B cell (primary cell): ENCODE measurements at regions of chr9 and their contacts with region 1.

Region 1: DNA sequence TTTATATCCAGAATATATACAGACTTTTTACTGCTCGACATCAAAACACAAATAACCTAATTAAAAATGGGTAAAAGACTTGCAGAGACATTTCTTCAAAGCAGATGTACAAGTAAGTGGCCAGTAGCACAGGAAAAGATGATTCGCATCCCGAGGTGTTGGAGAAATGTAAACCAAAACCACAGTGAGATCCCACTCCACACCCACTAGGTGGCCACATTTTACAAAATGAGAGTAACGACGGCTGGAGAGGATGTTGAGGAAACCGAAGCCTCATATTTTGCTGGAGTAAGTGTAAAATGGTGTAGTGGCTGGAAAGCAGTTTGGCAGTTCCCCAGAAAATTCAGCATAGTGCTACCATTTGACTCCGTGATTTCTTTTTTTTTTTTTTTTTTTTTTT is 21.2 kb upstream of the GBGT1 start:
- DNase-seq: peak; percentile 58
- ATAC-seq: no peak
- H3K4me3 ChIP-seq: no peak overlapping the region
- H3K4me3 Mint-ChIP-seq: no peak overlapping the region
- H3K27ac ChIP-seq: no peak overlapping the region
- H3K27ac Mint-ChIP-seq: no peak overlapping the region
- H3K4me1 ChIP-seq: peaks cover 8 to 12% of the 10 kb centered on the region in 2 donors
- H3K4me1 Mint-ChIP-seq: peaks cover 8% of the 10 kb centered on the region
- H3K27me3 ChIP-seq: peaks cover 0 to 18% (median 4%) of the 10 kb centered on the region in 4 experiments
- H3K27me3 Mint-ChIP-seq: peaks cover 30% of the 10 kb centered on the region
- CTCF ChIP-seq: peak; percentile 43

Region 2: DNA sequence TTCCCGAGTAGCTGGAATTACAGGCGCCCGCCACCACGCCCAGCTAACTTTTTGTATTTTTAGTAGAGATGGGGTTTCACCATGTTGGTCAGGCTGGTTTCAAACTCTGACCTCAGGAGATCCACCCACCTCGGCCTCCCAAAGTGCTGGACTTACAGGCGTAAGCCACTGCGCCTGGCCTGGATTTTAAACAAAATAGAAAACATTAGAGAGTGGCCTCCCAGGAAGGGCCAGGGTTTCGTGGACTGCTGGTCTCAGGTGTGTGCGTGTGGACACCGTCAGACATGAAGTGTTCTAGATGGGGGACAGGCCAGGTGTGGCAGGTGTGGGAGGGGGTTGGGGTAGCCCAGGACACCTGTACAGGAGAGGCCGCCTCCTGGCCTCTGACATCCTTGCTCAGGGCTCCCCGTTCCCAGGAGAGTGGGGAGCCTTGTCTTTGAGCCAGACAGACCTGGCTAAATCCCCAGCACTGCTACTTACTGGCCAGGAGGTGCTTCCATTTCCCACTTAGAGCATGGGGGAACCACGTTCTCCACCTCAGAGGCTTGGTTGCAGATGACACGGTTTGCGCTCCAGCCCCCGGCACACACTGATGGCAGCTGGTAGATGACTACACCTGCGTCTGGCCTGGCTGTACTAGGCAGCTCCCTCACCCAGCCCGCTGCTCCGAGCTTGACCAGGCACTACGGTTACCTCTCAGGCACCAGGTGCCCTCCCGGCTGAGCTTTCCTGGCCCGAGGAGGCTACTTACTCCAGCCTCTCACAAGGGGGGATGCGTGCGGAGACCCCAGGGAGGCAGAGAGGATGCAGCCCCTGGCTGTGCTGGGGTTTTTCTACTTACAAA is 14.0 kb before region 1 on chr9:
- CTCF ChIA-PET with region 1: interaction called, 25 read pairs
- POLR2A ChIA-PET with region 1: no interaction called
- intact Hi-C with region 1: no loop called
- DNase-seq: peak; percentile 53
- ATAC-seq: peak; percentile 42
- H3K4me3 ChIP-seq: peak overlapping the region in 1 of 5 experiments; percentile 15
- H3K4me3 Mint-ChIP-seq: peak overlapping the region; percentile 75
- H3K27ac ChIP-seq: no peak overlapping the region
- H3K27ac Mint-ChIP-seq: no peak overlapping the region
- H3K4me1 ChIP-seq: peaks cover 16% of the 10 kb centered on the region in 2 donors
- H3K4me1 Mint-ChIP-seq: peaks cover 17% of the 10 kb centered on the region
- H3K27me3 ChIP-seq: peaks cover 0 to 23% (median 7%) of the 10 kb centered on the region in 4 experiments
- H3K27me3 Mint-ChIP-seq: peaks cover 29% of the 10 kb centered on the region
- CTCF ChIP-seq: no peak

Region 3: GRCh38 chr9:133306242-133307204 is 121.6 kb after region 1 on chr9:
- CTCF ChIA-PET with region 1: no interaction called
- POLR2A ChIA-PET with region 1: no interaction called
- intact Hi-C with region 1: no loop called
- DNase-seq: no peak
- ATAC-seq: no peak
- H3K4me3 ChIP-seq: no peak overlapping the region
- H3K4me3 Mint-ChIP-seq: no peak overlapping the region
- H3K27ac ChIP-seq: no peak overlapping the region
- H3K27ac Mint-ChIP-seq: no peak overlapping the region
- H3K4me1 ChIP-seq: no peaks in the 10 kb centered on the region
- H3K4me1 Mint-ChIP-seq: no peaks in the 10 kb centered on the region
- H3K27me3 ChIP-seq: no peaks in the 10 kb centered on the region
- H3K27me3 Mint-ChIP-seq: peaks cover 22% of the 10 kb centered on the region
- CTCF ChIP-seq: no peak

Region 4: DNA sequence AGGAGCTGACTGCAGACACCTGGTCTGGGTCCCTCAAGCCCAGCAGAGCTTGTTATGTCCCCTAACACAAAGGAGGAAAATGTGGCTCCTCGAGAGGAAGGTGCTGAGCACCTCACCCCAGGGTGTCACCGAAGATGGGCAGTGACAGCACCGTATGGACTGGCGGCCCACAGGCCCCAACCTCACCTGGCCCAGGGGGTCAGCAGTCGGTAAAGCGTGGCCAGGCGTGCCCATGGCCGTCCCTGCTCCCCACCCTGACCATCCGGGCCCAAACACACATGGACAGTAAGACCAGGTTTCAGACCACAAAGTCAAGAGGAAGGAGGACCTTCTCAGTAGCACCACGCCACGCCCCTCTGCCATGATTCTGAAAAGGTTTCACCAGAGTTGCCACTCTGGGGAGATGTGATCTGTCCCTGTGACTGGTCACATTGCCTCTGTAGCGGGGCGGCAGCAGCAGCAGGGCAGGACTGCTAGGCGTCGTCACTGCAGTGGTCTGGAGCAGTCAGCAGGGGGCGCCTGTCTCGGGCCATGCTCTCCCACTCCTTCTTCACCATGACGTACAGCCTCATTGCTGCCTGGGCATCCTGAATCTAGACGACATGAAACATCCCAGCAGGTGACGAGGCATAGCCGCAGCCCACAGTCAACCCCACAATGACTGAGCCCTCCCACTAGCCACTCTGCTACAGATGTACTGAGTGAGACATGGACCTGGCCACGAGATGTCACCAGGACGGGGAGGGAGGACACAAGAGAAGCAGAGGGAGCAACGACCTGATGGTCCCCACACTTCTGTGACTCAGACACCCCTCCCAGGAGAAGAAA is 221.7 kb after region 1 on chr9:
- CTCF ChIA-PET with region 1: interaction called, 34 read pairs
- POLR2A ChIA-PET with region 1: no interaction called
- intact Hi-C with region 1: no loop called
- DNase-seq: peak; percentile 86
- ATAC-seq: peak; percentile 93
- H3K4me3 ChIP-seq: no peak overlapping the region
- H3K4me3 Mint-ChIP-seq: no peak overlapping the region
- H3K27ac ChIP-seq: no peak overlapping the region
- H3K27ac Mint-ChIP-seq: peak overlapping the region; percentile 46
- H3K4me1 ChIP-seq: peaks cover 0 to 2% of the 10 kb centered on the region in 2 donors
- H3K4me1 Mint-ChIP-seq: peaks cover 2% of the 10 kb centered on the region
- H3K27me3 ChIP-seq: no peaks in the 10 kb centered on the region
- H3K27me3 Mint-ChIP-seq: no peaks in the 10 kb centered on the region
- CTCF ChIP-seq: peak; percentile 87

Region 5: DNA sequence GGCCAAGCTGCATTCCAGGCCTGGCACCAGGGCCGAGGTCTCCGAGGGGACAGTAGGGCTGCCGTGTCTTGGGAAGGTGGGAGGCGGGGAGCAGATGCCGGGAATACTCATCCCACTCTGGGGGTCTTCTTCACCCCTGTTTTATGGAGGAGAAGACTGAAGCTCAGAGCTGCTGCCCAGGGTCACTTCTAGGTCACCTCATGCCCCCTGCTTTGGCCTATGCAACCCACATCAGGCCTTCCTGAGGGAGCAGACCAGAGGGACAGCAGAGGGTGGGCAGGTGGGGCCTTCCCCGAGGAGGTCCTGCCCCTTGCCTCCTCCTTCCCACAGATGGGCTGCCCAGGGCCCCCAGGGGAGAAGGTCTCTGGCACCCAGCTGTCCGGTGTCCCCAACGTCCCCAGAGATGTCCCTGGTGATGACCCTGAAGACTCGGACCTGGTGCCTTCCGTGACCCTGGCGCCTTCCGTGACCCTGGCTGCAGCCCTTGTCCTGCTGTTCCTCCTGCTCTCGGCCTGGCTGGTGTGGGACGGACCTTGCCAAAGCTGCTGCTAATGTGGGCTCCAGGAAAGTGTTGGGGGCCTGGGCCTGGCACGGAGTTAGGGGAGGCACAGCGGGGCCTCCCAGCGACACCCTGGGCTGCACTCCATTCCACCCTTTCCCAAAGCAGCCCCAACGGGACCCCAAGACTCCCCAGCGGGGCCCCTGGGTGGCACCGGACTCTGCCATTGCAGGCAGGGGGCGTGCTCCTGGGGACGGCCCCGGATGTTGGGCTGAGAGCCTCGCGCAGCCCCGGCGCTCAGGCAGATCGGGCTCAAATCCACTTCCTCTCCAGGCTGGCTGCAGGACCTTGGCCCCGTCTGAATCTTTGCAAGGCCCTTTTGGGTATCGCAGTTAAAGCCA is 300.6 kb after region 1 on chr9:
- CTCF ChIA-PET with region 1: interaction called, 144 read pairs
- POLR2A ChIA-PET with region 1: no interaction called
- intact Hi-C with region 1: loop called (anchors 1 kb)
- DNase-seq: no peak
- ATAC-seq: peak; percentile 62
- H3K4me3 ChIP-seq: peak overlapping the region in 3 of 5 experiments; percentile 14 to 31 (median 28)
- H3K4me3 Mint-ChIP-seq: peak overlapping the region; percentile 59
- H3K27ac ChIP-seq: no peak overlapping the region
- H3K27ac Mint-ChIP-seq: no peak overlapping the region
- H3K4me1 ChIP-seq: peaks cover 5 to 10% of the 10 kb centered on the region in 2 donors
- H3K4me1 Mint-ChIP-seq: peaks cover 4% of the 10 kb centered on the region
- H3K27me3 ChIP-seq: peaks cover 0 to 10% (median 0%) of the 10 kb centered on the region in 4 experiments
- H3K27me3 Mint-ChIP-seq: peaks cover 18% of the 10 kb centered on the region
- CTCF ChIP-seq: no peak